ENCODE measurements at regions of chr11 and their contacts with region 1.

Region 1: GRCh38 chr11:14358729-14359439 is at the start of gene RRAS2:
- DNase-seq: peak; percentile 75 to 88
- ATAC-seq: peak; percentile 85 to 92 (median 91)
- H3K4me3 ChIP-seq: peak within 1 kb of the TSS; percentile 93
- H3K4me3 Mint-ChIP-seq: peak within 1 kb of the TSS; percentile 93
- H3K27ac ChIP-seq: peak within 1 kb of the TSS; percentile 75
- H3K27ac Mint-ChIP-seq: peak within 1 kb of the TSS; percentile 90 to 97
- H3K4me1 ChIP-seq: peaks cover 25% of the 10 kb centered on the region
- H3K4me1 Mint-ChIP-seq: peaks cover 40 to 46% of the 10 kb centered on the region in 2 donors
- H3K27me3 ChIP-seq: no peaks in the 10 kb centered on the region
- H3K27me3 Mint-ChIP-seq: no peaks in the 10 kb centered on the region
- CTCF ChIP-seq: no peak
- total RNA-seq, gene RRAS2: 62.1 to 86.7 (median 69.6) TPM

Region 2: DNA sequence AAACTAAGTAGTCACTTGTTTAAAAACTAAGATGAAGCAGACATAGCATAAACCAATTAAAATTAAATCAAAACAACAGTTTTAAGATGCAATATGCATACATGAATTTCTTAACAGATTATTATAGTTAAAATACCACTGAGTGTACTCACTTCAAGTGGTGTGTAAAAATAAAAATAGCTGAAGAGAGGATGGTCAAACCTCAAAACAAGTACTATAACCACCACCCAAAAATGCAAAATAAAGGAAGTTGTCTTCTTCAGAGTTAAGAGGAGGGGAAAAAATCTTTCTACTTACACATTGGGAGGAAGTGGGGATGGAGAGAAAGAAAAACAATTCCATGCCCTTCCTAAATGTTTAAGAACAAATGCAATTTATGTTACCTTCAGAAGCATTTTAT is 31.8 kb before region 1 on chr11:
- intact Hi-C with region 1: loop called (anchors 2 kb)
- DNase-seq: no peak
- ATAC-seq: peak in 2 of 3 donors; percentile 29 to 53
- H3K4me3 ChIP-seq: peak overlapping the region; percentile 25
- H3K4me3 Mint-ChIP-seq: peak overlapping the region; percentile 91
- H3K27ac ChIP-seq: peak overlapping the region; percentile 56
- H3K27ac Mint-ChIP-seq: peak overlapping the region; percentile 86 to 93
- H3K4me1 ChIP-seq: peaks cover 43% of the 10 kb centered on the region
- H3K4me1 Mint-ChIP-seq: peaks cover 60 to 63% of the 10 kb centered on the region in 2 donors
- H3K27me3 ChIP-seq: no peaks in the 10 kb centered on the region
- H3K27me3 Mint-ChIP-seq: no peaks in the 10 kb centered on the region
- CTCF ChIP-seq: no peak

Region 3: GRCh38 chr11:14413307-14414069 is 54.6 kb after region 1 on chr11:
- intact Hi-C with region 1: loop called (anchors 2 kb)
- DNase-seq: no peak
- ATAC-seq: no peak
- H3K4me3 ChIP-seq: no peak overlapping the region
- H3K4me3 Mint-ChIP-seq: no peak overlapping the region
- H3K27ac ChIP-seq: no peak overlapping the region
- H3K27ac Mint-ChIP-seq: peak overlapping the region; percentile 94 to 95
- H3K4me1 ChIP-seq: peaks cover 21% of the 10 kb centered on the region
- H3K4me1 Mint-ChIP-seq: peaks cover 55 to 59% of the 10 kb centered on the region in 2 donors
- H3K27me3 ChIP-seq: no peaks in the 10 kb centered on the region
- H3K27me3 Mint-ChIP-seq: no peaks in the 10 kb centered on the region
- CTCF ChIP-seq: no peak

Measured in natural killer cell (primary cell).